ENCODE measurements at regions of chrX and their contacts with region 1.

Region 1: GRCh38 chrX:119093991-119094737 is 21.4 kb downstream of the CT47C1 start:
- DNase-seq: no peak
- H3K4me3 ChIP-seq: no peak overlapping the region
- H3K27ac ChIP-seq: no peak overlapping the region
- H3K4me1 ChIP-seq: no peaks in the 10 kb centered on the region
- H3K27me3 ChIP-seq: peaks cover 0 to 31% of the 10 kb centered on the region in 2 donors
- CTCF ChIP-seq: no peak
- POLR2A ChIP-seq: no peak

Region 2: DNA sequence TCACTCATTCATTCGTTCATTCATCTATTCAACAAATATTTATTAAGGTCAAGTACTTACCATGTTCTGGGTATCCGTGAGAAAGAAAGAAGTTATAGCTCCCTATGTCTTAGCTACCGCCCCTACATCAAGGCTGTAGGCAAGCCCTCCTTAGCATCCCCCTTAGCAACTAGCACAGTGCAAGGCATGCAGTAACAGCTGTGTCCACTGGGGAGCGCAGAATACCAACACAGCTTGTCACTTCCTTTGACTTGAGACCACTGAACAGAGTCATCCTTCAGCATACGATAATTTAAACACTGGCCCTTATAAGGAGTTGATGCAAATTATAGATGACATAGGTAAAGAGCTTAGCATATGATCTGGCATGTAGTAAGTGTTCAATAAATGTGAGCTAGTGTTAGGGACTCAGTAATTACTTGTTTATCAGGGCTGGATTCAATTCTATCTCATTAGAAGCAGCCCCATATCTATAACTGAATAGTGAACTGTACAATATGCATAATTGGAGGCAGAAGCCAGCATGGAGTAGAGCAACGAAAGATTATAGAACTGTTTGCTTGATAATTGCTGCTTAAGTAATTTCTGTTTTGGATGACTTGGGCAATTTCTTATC is 24.7 kb after region 1 on chrX:
- intact Hi-C with region 1: loop called (anchors 1 kb)
- DNase-seq: peak in 1 of 2 donors; percentile 50
- H3K4me3 ChIP-seq: no peak overlapping the region
- H3K27ac ChIP-seq: no peak overlapping the region
- H3K4me1 ChIP-seq: no peaks in the 10 kb centered on the region
- H3K27me3 ChIP-seq: peaks cover 0 to 60% of the 10 kb centered on the region in 2 donors
- CTCF ChIP-seq: peak in 2 of 3 donors; percentile 43 to 58
- POLR2A ChIP-seq: no peak

Region 3: DNA sequence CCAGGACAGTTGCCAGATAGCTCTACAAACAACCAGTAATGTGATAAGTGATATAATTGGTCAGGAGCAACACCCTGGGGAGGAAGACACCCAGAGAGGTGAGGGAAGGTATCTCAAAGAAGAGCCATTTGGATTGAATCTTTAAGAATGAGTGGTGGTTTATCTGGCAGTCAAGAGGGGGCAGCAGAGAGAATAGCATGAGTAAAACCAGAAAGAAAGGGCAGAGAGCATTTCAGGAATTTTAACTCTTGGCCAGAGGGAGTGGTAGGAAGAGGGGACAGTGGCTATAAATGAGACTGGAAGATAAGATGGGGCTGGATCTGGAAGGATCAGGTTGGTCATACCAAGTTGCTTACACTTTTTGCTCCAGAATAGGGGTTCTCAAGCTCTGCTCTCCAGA is 604.7 kb after region 1 on chrX:
- intact Hi-C with region 1: no loop called
- DNase-seq: no peak
- H3K4me3 ChIP-seq: no peak overlapping the region
- H3K27ac ChIP-seq: no peak overlapping the region
- H3K4me1 ChIP-seq: no peaks in the 10 kb centered on the region
- H3K27me3 ChIP-seq: peaks cover 0 to 3% of the 10 kb centered on the region in 2 donors
- CTCF ChIP-seq: peak in 1 of 3 donors; percentile 33
- POLR2A ChIP-seq: no peak

Measured in breast epithelium (tissue), 4 donors.